Heart right ventricle (tissue), 16 donors: ENCODE measurements at regions of chr18 and their contacts with region 1.

Region 1: GRCh38 chr18:63367053-63367953 is at the start of gene KDSR:
- DNase-seq: peak; percentile 95 to 97
- ATAC-seq: peak; percentile 97 to 99 (median 98)
- H3K4me3 ChIP-seq: peak within 1 kb of the TSS; percentile 81 to 97 (median 90)
- H3K27ac ChIP-seq: peak within 1 kb of the TSS; percentile 94 to 99 (median 98)
- H3K4me1 ChIP-seq: peaks cover 3 to 36% (median 13%) of the 10 kb centered on the region in 9 donors
- H3K27me3 ChIP-seq: no peaks in the 10 kb centered on the region
- CTCF ChIP-seq: peak in 1 of 9 donors; percentile 8
- total RNA-seq, gene KDSR: 28.6 to 41.6 (median 34.9) TPM

Region 2: DNA sequence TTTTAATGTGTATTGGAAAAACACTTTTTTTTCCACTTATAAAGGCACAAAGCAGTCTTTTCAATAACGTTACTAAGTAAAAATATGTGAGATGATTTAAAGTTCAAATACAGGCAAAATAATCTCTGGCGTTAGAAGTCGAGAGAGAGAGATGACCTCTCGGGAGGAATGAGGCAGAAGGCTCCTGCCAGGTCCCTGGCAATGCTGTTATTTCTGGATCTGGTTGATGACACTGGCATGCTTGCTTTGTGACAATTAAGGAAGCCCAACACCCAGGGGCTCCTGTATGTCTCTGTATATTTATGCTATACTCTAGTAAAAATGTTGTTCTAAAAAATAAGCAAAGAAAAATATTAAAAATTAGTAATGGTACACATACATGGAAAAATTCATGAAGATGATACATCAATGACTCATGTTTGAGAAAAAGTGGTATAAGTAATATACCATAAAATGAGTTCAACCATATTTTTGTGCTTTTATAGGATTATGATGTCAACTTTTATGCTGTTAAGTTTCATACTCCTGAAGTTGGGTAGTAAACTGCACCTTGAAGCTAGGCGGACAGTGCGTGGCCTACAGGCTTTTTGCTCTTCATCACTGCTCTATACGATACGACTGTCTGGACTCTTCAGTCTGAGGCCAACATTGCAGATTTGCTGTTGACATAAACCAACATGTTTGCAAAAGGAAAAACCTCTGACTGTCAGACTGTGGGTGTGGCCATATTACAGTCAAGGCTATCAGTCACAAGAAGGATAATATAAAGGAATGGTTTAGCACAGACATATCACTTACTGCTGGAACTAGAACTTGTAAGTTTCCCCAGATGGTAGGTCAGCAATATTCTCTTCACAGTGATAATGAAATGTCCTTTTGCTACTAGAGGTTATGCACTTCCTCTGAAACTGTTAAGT is 35.2 kb after region 1 on chr18:
- intact Hi-C with region 1: loop called in 3 of 10 experiments (anchors 5 kb)
- DNase-seq: peak in 1 of 2 donors; percentile 48
- ATAC-seq: peak in 7 of 8 donors; percentile 55 to 93 (median 83)
- H3K4me3 ChIP-seq: no peak overlapping the region
- H3K27ac ChIP-seq: peak overlapping the region in 9 of 10 donors; percentile 4 to 79 (median 64)
- H3K4me1 ChIP-seq: peaks cover 0 to 24% (median 5%) of the 10 kb centered on the region in 9 donors
- H3K27me3 ChIP-seq: no peaks in the 10 kb centered on the region
- CTCF ChIP-seq: no peak

Region 3: GRCh38 chr18:63422087-63422809 is 54.9 kb after region 1 on chr18 and contains the start of gene VPS4B:
- intact Hi-C with region 1: loop called in 7 of 10 experiments (anchors 1 to 10 kb)
- DNase-seq: peak; percentile 99 to 100
- ATAC-seq: peak; percentile 99
- H3K4me3 ChIP-seq: peak within 1 kb of the TSS; percentile 65 to 97 (median 86)
- H3K27ac ChIP-seq: peak within 1 kb of the TSS; percentile 92 to 99 (median 94)
- H3K4me1 ChIP-seq: peaks cover 5 to 47% (median 24%) of the 10 kb centered on the region in 9 donors
- H3K27me3 ChIP-seq: no peaks in the 10 kb centered on the region
- CTCF ChIP-seq: no peak
- total RNA-seq, gene VPS4B: 19.7 to 39.6 (median 22.8) TPM

Region 4: DNA sequence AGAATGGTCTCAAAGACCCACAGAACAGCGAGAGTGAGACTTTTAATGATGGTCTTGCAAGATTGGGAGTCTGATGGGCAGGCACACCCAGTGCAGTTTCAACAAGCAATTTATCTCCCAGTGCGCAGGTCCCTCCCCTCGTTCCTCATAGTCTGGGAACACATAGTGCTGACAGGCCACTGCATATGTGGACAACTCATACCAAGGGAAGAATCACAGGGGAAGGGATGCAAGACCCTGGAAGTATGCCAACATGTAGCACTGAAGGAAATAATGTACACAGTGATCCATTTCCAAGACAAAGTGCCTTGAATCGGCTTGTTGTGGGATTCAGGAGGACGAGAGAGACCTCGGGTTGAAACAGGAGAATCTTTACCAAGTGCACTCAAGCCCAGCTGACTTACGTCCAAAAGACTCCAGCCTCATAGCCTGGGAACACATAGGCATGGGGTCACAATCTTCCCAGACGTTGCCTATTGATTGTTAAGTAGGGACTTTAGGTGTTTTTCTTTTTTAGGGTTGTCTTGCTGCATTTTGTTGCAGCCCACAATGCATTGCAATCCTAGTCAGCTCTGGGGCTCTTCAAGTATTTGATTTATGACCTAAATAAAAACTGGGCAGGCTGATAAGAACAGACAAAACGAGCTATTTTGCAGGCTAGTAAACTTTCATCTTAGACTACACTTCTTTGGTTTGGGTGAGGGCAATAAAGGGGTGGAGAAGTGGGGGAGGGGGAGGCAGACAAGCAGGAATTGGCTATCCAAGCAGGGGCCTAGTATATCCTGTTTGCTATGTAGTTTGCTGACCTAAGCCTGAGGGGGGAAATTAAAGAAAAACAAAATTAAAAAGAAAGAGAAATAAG is 84.7 kb after region 1 on chr18:
- intact Hi-C with region 1: no loop called
- DNase-seq: no peak
- ATAC-seq: peak in 3 of 8 donors; percentile 16 to 62 (median 50)
- H3K4me3 ChIP-seq: no peak overlapping the region
- H3K27ac ChIP-seq: peak overlapping the region in 3 of 10 donors; percentile 6 to 25 (median 12)
- H3K4me1 ChIP-seq: peaks cover 0 to 16% (median 6%) of the 10 kb centered on the region in 9 donors
- H3K27me3 ChIP-seq: no peaks in the 10 kb centered on the region
- CTCF ChIP-seq: no peak

Region 5: GRCh38 chr18:63477972-63478371 is 110.7 kb after region 1 on chr18:
- intact Hi-C with region 1: no loop called
- DNase-seq: no peak
- ATAC-seq: no peak
- H3K4me3 ChIP-seq: no peak overlapping the region
- H3K27ac ChIP-seq: no peak overlapping the region
- H3K4me1 ChIP-seq: no peaks in the 10 kb centered on the region
- H3K27me3 ChIP-seq: peaks cover 0 to 18% (median 0%) of the 10 kb centered on the region in 7 donors
- CTCF ChIP-seq: no peak

Region 6: GRCh38 chr18:63882333-63883141 is 515.2 kb after region 1 on chr18:
- intact Hi-C with region 1: no loop called
- DNase-seq: no peak
- ATAC-seq: peak in 7 of 8 donors; percentile 23 to 84 (median 69)
- H3K4me3 ChIP-seq: no peak overlapping the region
- H3K27ac ChIP-seq: no peak overlapping the region
- H3K4me1 ChIP-seq: peaks cover 0 to 10% (median 7%) of the 10 kb centered on the region in 9 donors
- H3K27me3 ChIP-seq: no peaks in the 10 kb centered on the region
- CTCF ChIP-seq: no peak